Activated CD4-positive, alpha-beta memory T cell treated with anti-CD3 and anti-CD28 coated beads for 36 hours (primary cell): ENCODE measurements at regions of chrX and their contacts with region 1.

Region 1: DNA sequence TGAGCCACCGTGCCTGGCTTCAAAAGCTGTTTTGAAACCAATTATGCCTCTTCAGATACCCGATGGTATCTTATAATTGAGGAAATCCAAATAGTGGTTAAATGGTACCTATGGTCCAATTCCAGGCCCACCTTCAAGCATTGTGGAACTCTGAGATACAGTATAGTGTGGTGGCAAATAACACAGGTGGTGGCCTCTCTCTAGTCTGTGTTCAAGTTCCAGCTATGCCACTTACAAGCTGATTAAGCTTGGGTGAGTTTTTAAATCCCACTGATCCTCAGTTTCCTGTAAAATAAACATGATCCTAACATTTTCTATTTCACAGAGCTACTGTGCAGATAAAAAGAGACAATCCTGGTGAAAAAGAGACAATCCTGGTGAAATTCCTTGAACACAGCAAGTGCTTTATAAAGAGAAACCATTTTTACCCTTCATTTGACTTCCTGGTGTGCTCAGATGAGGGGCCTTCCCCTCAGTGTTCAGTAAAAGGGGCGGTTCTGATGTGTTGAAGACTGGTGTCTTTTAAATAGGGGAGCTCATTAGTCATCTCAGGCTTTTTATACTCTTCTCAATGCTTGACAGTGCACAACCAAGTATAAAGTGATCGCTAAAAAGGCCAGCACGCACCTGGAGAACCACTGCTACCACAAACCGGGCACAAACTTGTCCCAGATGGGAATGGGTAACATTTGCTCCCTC is 30.8 kb upstream of the CD40LG start:
- DNase-seq: peak; percentile 40
- H3K4me3 Mint-ChIP-seq: peak overlapping the region; percentile 49
- H3K27ac Mint-ChIP-seq: peak overlapping the region; percentile 92
- H3K4me1 Mint-ChIP-seq: peaks cover 53% of the 10 kb centered on the region
- H3K27me3 Mint-ChIP-seq: no peaks in the 10 kb centered on the region

Region 2: GRCh38 chrX:136598631-136599030 is 18.5 kb before region 1 on chrX:
- CTCF ChIA-PET with region 1: no interaction called
- POLR2A ChIA-PET with region 1: interaction called, 5 read pairs
- intact Hi-C with region 1: loop called (anchors 1 kb)
- DNase-seq: peak; percentile 63
- H3K4me3 Mint-ChIP-seq: peak overlapping the region; percentile 54
- H3K27ac Mint-ChIP-seq: peak overlapping the region; percentile 92
- H3K4me1 Mint-ChIP-seq: peaks cover 62% of the 10 kb centered on the region
- H3K27me3 Mint-ChIP-seq: no peaks in the 10 kb centered on the region

Region 3: GRCh38 chrX:136635235-136635634 is 18.1 kb after region 1 on chrX:
- CTCF ChIA-PET with region 1: interaction called, 4 read pairs
- POLR2A ChIA-PET with region 1: interaction called, 22 read pairs
- intact Hi-C with region 1: loop called (anchors 1 kb)
- DNase-seq: no peak
- H3K4me3 Mint-ChIP-seq: peak overlapping the region; percentile 70
- H3K27ac Mint-ChIP-seq: peak overlapping the region; percentile 91
- H3K4me1 Mint-ChIP-seq: peaks cover 80% of the 10 kb centered on the region
- H3K27me3 Mint-ChIP-seq: no peaks in the 10 kb centered on the region

Region 4: DNA sequence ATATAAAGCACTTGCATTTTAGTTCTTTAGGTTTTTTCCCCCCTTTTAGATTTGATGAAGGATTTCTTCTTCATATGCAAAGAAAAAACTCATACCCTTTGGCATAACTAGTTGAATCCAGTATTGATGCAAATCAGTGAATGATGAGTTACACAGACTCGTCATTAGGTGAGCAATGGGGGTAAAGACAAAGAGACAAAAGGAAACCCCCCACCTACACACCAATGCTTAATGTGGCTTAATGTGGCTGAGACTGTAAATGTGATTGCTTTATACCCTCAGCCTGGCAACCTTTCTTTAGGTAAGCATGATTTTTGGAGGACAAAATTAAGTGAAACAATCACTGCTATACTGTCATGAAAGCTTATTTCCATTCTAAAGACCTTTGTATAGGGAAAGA is 70.3 kb after region 1 on chrX:
- CTCF ChIA-PET with region 1: no interaction called
- POLR2A ChIA-PET with region 1: no interaction called
- intact Hi-C with region 1: loop called (anchors 2 kb)
- DNase-seq: peak; percentile 48
- H3K4me3 Mint-ChIP-seq: peak overlapping the region; percentile 17
- H3K27ac Mint-ChIP-seq: peak overlapping the region; percentile 83
- H3K4me1 Mint-ChIP-seq: peaks cover 53% of the 10 kb centered on the region
- H3K27me3 Mint-ChIP-seq: no peaks in the 10 kb centered on the region

Region 5: DNA sequence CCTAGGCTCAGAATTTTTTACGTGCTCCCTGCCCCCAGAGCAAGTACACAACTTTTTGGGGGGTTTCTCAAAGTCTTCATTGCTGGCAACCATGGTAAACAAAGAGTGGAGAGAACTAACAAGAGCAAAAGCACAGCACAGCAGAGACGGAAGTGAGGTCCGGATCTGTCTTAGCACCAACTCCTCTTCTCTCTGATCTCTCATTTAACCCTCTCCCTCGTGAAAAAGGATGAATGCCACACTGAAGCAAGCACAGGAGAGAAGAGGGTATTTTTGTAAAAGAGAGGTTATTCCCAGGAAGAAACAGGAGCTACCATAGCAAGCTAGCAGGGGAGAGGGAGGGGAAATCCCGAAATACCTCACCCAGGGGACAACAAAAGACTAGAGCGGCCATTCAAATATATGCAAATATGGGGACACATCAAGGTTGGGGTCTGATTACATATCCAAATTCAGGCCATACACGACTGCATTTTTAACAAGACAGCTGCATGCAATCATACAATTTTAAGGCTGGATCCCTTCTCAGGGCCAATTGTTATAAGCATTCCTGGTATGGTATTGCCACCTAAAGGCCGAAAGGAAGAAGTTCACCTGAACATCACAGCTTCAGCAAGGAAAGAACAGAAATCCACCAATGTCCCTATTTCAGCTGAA is 77.4 kb after region 1 on chrX:
- CTCF ChIA-PET with region 1: interaction called, 69 read pairs
- POLR2A ChIA-PET with region 1: interaction called, 5 read pairs
- intact Hi-C with region 1: no loop called
- DNase-seq: no peak
- H3K4me3 Mint-ChIP-seq: peak overlapping the region; percentile 77
- H3K27ac Mint-ChIP-seq: peak overlapping the region; percentile 97
- H3K4me1 Mint-ChIP-seq: peaks cover 75% of the 10 kb centered on the region
- H3K27me3 Mint-ChIP-seq: no peaks in the 10 kb centered on the region